Activated B cell treated with CpG ODN at 0.5 μM for 24 hours (primary cell): ENCODE measurements at regions of chr7 and their contacts with region 1.

Region 1: GRCh38 chr7:116180302-116180701 is 30.0 kb upstream of the TES start:
- DNase-seq: no peak
- ATAC-seq: peak; percentile 81
- H3K4me3 Mint-ChIP-seq: no peak overlapping the region
- H3K27ac Mint-ChIP-seq: no peak overlapping the region
- H3K4me1 Mint-ChIP-seq: no peaks in the 10 kb centered on the region
- H3K27me3 Mint-ChIP-seq: peaks cover 2% of the 10 kb centered on the region
- CTCF ChIP-seq: no peak

Region 2: GRCh38 chr7:116194115-116194514 is 13.8 kb after region 1 on chr7:
- CTCF ChIA-PET with region 1: interaction called, 11 read pairs
- POLR2A ChIA-PET with region 1: no interaction called
- intact Hi-C with region 1: no loop called
- DNase-seq: no peak
- ATAC-seq: no peak
- H3K4me3 Mint-ChIP-seq: no peak overlapping the region
- H3K27ac Mint-ChIP-seq: no peak overlapping the region
- H3K4me1 Mint-ChIP-seq: no peaks in the 10 kb centered on the region
- H3K27me3 Mint-ChIP-seq: no peaks in the 10 kb centered on the region
- CTCF ChIP-seq: no peak

Region 3: GRCh38 chr7:116218051-116218645 is 37.8 kb after region 1 on chr7:
- CTCF ChIA-PET with region 1: interaction called, 13 read pairs
- POLR2A ChIA-PET with region 1: no interaction called
- intact Hi-C with region 1: no loop called
- DNase-seq: no peak
- ATAC-seq: no peak
- H3K4me3 Mint-ChIP-seq: peak overlapping the region; percentile 28
- H3K27ac Mint-ChIP-seq: no peak overlapping the region
- H3K4me1 Mint-ChIP-seq: peaks cover 83% of the 10 kb centered on the region
- H3K27me3 Mint-ChIP-seq: no peaks in the 10 kb centered on the region
- CTCF ChIP-seq: no peak

Region 4: GRCh38 chr7:116377721-116378120 is 197.4 kb after region 1 on chr7:
- CTCF ChIA-PET with region 1: no interaction called
- POLR2A ChIA-PET with region 1: no interaction called
- intact Hi-C with region 1: no loop called
- DNase-seq: no peak
- ATAC-seq: no peak
- H3K4me3 Mint-ChIP-seq: no peak overlapping the region
- H3K27ac Mint-ChIP-seq: no peak overlapping the region
- H3K4me1 Mint-ChIP-seq: no peaks in the 10 kb centered on the region
- H3K27me3 Mint-ChIP-seq: no peaks in the 10 kb centered on the region
- CTCF ChIP-seq: no peak